ENCODE measurements at regions of chr11 and their contacts with region 1.

Region 1: DNA sequence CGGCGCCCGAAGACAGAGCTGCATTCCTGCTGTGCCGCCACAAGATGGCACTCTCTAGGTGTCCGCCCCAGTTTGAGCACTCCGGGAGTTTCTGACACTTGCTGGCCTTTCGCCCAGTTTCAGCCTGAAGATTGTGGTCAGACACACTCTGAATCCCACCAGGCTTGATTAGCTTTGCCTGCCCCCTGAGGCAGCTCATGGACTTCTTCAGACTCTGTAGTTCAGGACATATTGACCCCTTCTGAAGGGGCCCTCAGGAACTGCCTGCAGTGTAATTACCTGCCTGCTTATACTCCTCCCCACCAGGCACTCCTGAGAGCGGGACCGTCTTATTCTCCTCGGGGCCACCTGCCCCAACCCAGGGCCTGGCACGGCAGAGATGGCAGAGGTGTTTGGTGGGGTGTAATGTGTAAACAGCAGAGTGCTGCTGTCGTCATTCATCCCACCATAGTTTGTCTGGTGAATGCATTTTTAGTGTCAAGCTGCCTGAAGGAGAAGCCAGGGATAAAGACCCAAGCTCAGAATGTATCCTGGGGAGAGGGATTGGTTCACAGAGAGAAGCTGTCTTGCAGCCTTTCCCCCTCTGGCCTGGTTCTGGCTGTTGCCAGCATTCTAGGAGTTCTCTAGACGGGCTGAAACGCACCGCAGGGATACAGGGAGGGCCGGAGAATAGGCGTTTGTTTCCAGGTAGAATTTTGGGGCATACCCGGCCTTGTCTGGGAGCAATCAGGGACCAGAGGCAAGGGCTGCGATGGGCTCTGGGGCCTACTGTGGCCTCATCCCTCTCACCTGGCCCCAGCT is 46.4 kb downstream of the EIF3F start:
- DNase-seq: peak; percentile 90 to 94
- H3K4me3 ChIP-seq: no peak overlapping the region
- H3K27ac ChIP-seq: peak overlapping the region in 2 of 3 donors; percentile 39 to 50
- H3K4me1 ChIP-seq: peaks cover 14 to 39% of the 10 kb centered on the region in 2 donors
- H3K27me3 ChIP-seq: no peaks in the 10 kb centered on the region
- CTCF ChIP-seq: peak; percentile 72 to 90 (median 84)
- POLR2A ChIP-seq: no peak

Region 2: GRCh38 chr11:8070417-8071115 is 37.1 kb after region 1 on chr11:
- intact Hi-C with region 1: loop called (anchors 5 kb)
- DNase-seq: peak; percentile 32 to 41
- H3K4me3 ChIP-seq: no peak overlapping the region
- H3K27ac ChIP-seq: peak overlapping the region in 2 of 3 donors; percentile 91 to 99
- H3K4me1 ChIP-seq: peaks cover 20 to 49% of the 10 kb centered on the region in 2 donors
- H3K27me3 ChIP-seq: no peaks in the 10 kb centered on the region
- CTCF ChIP-seq: peak; percentile 12 to 67 (median 54)
- POLR2A ChIP-seq: no peak

Region 3: GRCh38 chr11:8092587-8093424 is 59.3 kb after region 1 on chr11:
- intact Hi-C with region 1: loop called (anchors 5 kb)
- DNase-seq: peak; percentile 72 to 75
- H3K4me3 ChIP-seq: no peak overlapping the region
- H3K27ac ChIP-seq: no peak overlapping the region
- H3K4me1 ChIP-seq: no peaks in the 10 kb centered on the region
- H3K27me3 ChIP-seq: no peaks in the 10 kb centered on the region
- CTCF ChIP-seq: peak; percentile 23 to 67 (median 52)
- POLR2A ChIP-seq: no peak